ENCODE measurements at regions of chr2 and their contacts with region 1.

Region 1: DNA sequence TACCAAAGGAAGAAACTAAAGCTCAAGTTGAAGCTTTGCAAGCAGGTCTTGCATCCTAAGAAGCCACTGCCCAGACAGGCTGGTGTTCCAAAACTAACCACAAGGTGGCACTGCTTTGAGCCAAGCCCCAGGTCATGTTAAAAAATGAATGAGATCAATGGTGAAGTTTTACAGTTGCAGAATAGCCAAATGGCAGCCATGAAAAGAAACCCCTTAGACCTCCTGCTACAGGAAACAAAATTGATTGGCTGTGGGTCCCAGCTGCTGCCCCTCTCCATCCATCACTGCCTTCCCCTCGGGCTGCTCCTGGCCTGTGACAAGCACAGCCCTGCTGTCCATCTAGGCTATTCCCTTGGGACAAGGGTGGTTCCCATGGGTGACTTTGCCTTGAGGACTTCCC is 20.7 kb upstream of the MREG start:
- DNase-seq: peak; percentile 90
- ATAC-seq: peak; percentile 47
- H3K4me3 Mint-ChIP-seq: no peak overlapping the region
- H3K27ac Mint-ChIP-seq: no peak overlapping the region
- H3K4me1 Mint-ChIP-seq: peaks cover 42% of the 10 kb centered on the region
- H3K27me3 Mint-ChIP-seq: no peaks in the 10 kb centered on the region

Region 2: GRCh38 chr2:216023055-216023648 is 10.9 kb before region 1 on chr2:
- CTCF ChIA-PET with region 1: interaction called, 52 read pairs
- POLR2A ChIA-PET with region 1: no interaction called
- intact Hi-C with region 1: no loop called
- DNase-seq: peak; percentile 72
- ATAC-seq: peak; percentile 88
- H3K4me3 Mint-ChIP-seq: no peak overlapping the region
- H3K27ac Mint-ChIP-seq: no peak overlapping the region
- H3K4me1 Mint-ChIP-seq: peaks cover 5% of the 10 kb centered on the region
- H3K27me3 Mint-ChIP-seq: no peaks in the 10 kb centered on the region

Region 3: GRCh38 chr2:216081487-216082116 is 47.5 kb after region 1 on chr2 and contains the starts of genes PECR and TMEM169:
- CTCF ChIA-PET with region 1: interaction called, 5 read pairs
- POLR2A ChIA-PET with region 1: no interaction called
- intact Hi-C with region 1: loop called in 1 of 2 experiments (anchors 5 kb)
- DNase-seq: peak; percentile 89
- ATAC-seq: peak; percentile 93
- H3K4me3 Mint-ChIP-seq: peak within 1 kb of the TSS; percentile 81
- H3K27ac Mint-ChIP-seq: peak within 1 kb of the TSS; percentile 81
- H3K4me1 Mint-ChIP-seq: peaks cover 59% of the 10 kb centered on the region
- H3K27me3 Mint-ChIP-seq: no peaks in the 10 kb centered on the region
- total RNA-seq, gene PECR: 17.0 to 20.8 TPM
- total RNA-seq, gene TMEM169: 1.6 to 1.8 TPM

Region 4: DNA sequence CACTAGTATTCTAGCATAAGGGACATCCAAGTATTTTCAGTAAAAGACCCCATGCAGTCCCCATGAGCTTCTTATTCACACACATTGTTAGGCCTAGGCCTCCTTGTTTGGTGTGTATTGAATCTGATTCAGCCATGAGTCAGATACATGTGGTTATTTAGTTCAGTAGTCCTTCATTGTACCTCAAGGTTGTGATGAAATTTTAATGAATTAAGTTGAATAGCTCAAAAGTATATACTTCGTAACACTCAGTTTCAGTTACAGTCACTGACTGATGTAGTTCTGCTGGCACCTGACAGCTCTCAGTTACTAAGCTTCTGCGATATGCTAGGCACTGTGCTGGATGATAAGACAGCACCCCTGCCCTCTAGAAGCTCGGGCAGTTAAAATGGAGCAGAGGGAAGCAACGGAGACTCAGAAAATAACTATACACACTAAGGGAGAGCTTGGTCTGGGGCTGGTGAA is 161.5 kb after region 1 on chr2:
- CTCF ChIA-PET with region 1: no interaction called
- POLR2A ChIA-PET with region 1: no interaction called
- intact Hi-C with region 1: loop called in 1 of 2 experiments (anchors 5 kb)
- DNase-seq: peak; percentile 62
- ATAC-seq: peak; percentile 96
- H3K4me3 Mint-ChIP-seq: peak overlapping the region; percentile 1
- H3K27ac Mint-ChIP-seq: peak overlapping the region; percentile 92
- H3K4me1 Mint-ChIP-seq: peaks cover 69% of the 10 kb centered on the region
- H3K27me3 Mint-ChIP-seq: no peaks in the 10 kb centered on the region

Region 5: DNA sequence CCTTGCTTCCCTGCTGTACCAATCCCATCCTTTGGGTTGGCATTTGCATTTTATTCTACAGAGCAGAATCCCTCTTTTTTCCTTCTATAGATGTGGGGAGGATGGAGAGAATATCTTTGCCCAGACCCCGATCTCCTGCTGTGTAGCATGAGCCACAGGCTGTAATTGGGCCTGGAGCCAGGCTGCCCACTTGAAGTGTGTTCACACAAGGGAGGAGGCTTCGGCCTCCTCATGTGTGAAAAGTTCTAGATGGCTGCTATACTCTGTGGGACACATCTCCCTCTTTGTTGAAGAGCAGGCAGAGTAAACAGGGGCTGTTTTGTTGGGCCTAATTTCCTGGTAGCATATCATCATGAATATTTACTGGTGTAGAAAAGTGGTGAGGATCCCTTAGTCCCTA is 201.4 kb after region 1 on chr2:
- CTCF ChIA-PET with region 1: no interaction called
- POLR2A ChIA-PET with region 1: no interaction called
- intact Hi-C with region 1: no loop called
- DNase-seq: no peak
- ATAC-seq: no peak
- H3K4me3 Mint-ChIP-seq: no peak overlapping the region
- H3K27ac Mint-ChIP-seq: no peak overlapping the region
- H3K4me1 Mint-ChIP-seq: no peaks in the 10 kb centered on the region
- H3K27me3 Mint-ChIP-seq: no peaks in the 10 kb centered on the region

Region 6: GRCh38 chr2:216412022-216412999 is 378.2 kb after region 1 on chr2 and contains the start of gene SMARCAL1:
- CTCF ChIA-PET with region 1: interaction called, 3 read pairs
- POLR2A ChIA-PET with region 1: no interaction called
- intact Hi-C with region 1: loop called in 1 of 2 experiments (anchors 5 kb)
- DNase-seq: peak; percentile 100
- ATAC-seq: peak; percentile 93
- H3K4me3 Mint-ChIP-seq: peak within 1 kb of the TSS; percentile 94
- H3K27ac Mint-ChIP-seq: peak within 1 kb of the TSS; percentile 93
- H3K4me1 Mint-ChIP-seq: peaks cover 13% of the 10 kb centered on the region
- H3K27me3 Mint-ChIP-seq: no peaks in the 10 kb centered on the region
- total RNA-seq, gene SMARCAL1: 25.9 to 27.7 TPM

Measured in activated CD4-positive, alpha-beta T cell treated with anti-CD3 and anti-CD28 coated beads for 36 hours (primary cell).